ENCODE measurements at regions of chr10 and their contacts with region 1.

Region 1: GRCh38 chr10:89414146-89414878 is at the start of gene IFIT5:
- DNase-seq: peak; percentile 89
- ATAC-seq: peak; percentile 95
- total RNA-seq, gene IFIT5: 8.2 TPM

Region 2: DNA sequence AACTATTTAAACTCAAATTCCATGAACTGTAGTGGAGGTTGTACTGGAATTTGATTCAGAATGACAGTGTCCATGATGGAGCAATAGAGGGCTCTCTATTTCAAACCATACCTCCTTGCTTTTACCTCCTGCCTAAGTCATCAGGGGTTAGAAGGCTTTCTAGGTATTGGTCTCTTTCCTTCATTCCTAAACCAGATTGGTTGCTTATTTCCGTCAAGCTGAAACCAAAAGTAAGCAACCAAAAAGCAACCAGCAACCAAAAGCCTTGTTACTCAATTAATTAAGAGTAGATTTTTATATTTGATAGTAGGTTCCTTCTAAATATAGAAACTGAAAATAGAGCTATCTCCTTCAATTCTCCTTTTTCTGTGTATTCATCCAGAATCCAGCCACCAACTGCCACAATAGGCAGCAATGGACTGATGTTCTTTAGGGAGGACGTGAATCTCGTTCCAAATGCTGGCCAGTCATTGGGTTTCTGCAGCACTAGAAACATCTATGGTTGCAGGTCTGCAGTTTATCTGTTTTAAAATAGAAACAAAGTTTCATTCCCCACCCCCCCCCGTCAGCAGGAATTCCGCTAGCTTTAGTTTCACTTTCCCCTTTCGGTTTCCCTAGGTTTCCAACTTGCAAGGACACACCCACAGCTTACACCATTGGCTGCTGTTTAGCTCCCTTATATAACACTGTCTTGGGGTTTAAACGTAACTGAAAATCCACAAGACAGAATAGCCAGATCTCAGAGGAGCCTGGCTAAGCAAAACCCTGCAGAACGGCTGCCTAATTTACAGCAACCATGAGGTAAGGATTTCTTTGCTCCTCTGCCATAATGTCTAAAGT is 22.2 kb before region 1 on chr10 and contains the start of gene IFIT1:
- intact Hi-C with region 1: loop called (anchors 1 kb)
- DNase-seq: no peak
- ATAC-seq: peak; percentile 94
- total RNA-seq, gene IFIT1: 36.0 TPM

Region 3: DNA sequence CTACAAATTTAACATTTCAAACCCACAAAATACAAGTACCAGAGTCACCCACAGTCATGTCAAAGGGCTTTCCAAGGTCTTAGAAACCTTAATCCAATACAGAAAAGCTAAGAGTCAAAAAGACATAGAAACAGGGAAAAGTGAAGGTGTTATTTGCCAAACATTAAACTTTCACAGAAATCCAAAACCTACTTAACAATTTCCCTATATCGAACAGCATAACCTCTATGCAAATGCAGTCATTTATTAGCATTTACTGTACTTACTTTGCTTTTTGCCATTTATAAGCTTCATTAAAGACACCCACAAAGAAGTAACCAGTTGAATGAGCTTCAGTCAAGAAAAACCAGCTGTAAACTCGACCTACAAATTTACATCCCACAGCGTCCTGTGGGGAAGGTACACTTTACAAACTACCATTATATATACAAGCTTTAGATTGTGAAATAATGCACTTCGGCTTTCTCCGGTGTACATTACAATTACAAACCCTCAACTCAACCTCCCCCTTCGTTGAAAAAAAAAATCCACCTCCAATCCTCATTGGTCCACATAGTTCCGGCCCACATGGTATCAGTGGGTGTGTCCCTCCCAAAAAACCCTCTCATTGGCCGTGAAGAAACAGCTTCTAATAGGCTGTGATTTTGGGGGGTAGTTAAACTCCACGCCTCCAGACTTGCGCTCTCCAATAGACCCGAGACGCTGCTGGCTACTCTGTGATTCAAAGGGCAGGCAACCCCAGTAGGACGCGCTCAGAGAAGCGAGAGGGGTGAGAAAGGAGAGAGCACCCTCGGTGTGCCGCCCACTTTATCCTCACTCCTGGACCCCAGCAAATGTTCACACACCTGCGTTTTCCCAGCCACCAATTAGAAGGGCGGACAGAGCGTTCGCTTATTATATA is 229.4 kb after region 1 on chr10:
- intact Hi-C with region 1: no loop called
- DNase-seq: peak; percentile 79
- ATAC-seq: peak; percentile 89

Measured in Right ventricle myocardium inferior (tissue), 1 donor.